Prostate gland (tissue), 2 donors: ENCODE measurements at regions of chr1 and their contacts with region 1.

Region 1: DNA sequence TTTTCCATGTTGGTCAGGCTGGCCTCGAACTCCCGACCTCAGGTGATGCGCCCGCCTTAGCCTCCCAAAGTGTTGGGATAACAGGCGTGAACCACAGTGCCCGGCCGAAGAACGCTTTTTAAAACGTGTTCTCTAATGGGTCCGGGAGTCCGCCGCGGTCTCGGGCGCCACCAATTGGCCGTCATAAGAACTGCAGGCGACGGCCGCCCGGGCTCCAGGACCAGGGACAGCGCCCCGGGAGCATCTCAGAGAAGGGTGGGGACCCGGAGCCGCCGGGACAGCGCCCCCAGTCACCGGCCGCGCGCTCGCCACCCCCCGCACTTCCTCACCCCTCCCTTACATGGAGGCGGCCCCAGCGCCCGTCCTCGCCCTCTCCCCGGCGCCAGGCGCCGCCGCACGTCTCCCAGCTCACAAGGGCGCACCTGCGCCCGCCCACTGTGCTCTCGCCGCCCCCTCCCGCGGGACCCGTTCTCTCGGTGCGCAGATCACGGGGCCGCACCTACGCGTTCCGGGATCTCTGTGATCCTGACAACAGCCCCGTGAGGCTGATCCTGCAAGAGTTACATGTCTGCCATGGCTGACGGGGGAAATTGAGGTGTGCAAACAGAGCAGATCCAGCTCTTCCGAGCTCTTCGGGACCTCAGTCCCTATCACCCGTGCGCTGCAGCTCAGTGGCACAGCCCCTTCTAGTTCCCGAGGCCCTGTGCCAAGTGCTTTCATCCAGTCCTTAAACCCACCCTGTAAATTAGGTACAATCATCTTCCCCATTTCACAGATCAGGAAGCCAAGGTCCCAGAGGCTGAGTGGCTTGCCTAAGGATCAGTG is 9.8 kb downstream of the RAP1GAP start:
- DNase-seq: peak; percentile 75
- H3K4me3 ChIP-seq: peak overlapping the region in 1 of 2 donors; percentile 17
- H3K27ac ChIP-seq: no peak overlapping the region
- H3K4me1 ChIP-seq: no peaks in the 10 kb centered on the region
- H3K27me3 ChIP-seq: no peaks in the 10 kb centered on the region
- CTCF ChIP-seq: peak; percentile 89 to 99 (median 94)
- POLR2A ChIP-seq: no peak

Region 2: GRCh38 chr1:21255278-21255942 is 403.9 kb before region 1 on chr1:
- intact Hi-C with region 1: loop called (anchors 10 kb)
- DNase-seq: peak; percentile 90
- H3K4me3 ChIP-seq: no peak overlapping the region
- H3K27ac ChIP-seq: peak overlapping the region; percentile 79 to 83
- H3K4me1 ChIP-seq: peaks cover 7% of the 10 kb centered on the region
- H3K27me3 ChIP-seq: no peaks in the 10 kb centered on the region
- CTCF ChIP-seq: peak; percentile 62 to 94 (median 89)
- POLR2A ChIP-seq: no peak

Region 3: DNA sequence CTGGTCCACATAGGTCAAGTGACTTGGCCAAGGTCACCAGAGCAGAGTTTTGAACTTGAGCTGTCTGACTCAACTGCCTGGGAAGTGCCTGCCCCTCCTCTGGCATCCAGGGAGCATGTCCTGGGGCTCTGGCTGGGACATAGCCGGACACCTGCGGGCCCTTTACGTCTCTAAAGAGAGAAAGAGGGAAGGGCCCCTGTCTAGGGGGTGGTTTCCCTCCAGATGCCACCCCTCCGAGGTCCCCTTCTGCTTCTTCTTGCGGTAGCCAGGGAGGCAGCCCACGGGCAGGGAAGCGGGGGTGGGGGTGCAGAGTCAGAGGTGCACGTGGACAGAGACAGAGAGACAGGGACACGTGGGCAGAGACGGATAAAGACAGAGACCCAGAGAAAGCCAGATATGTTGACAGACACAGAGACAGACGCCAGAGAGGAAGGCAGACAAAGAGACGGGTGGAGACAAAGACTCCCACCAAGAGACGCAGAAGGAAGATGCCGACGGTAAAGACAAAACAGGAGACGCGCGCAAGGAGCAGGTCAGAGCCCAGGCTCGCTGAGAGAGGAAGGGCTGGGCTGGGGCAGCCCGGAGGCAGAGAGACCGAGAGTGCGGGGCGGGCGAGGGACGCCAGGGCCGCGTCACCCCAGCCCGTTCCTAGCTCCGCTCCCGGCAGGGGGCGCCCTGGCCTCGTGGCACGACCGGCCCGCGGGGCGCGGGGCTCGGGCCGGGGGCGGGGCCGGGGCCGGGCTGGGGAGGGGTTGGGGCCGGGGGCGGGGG is 150.5 kb before region 1 on chr1:
- intact Hi-C with region 1: loop called (anchors 5 kb)
- DNase-seq: peak; percentile 44
- H3K4me3 ChIP-seq: peak overlapping the region in 1 of 2 donors; percentile 22
- H3K27ac ChIP-seq: no peak overlapping the region
- H3K4me1 ChIP-seq: no peaks in the 10 kb centered on the region
- H3K27me3 ChIP-seq: no peaks in the 10 kb centered on the region
- CTCF ChIP-seq: peak; percentile 49 to 65 (median 60)
- POLR2A ChIP-seq: no peak